Posterior vena cava (tissue), 2 donors: ENCODE measurements at regions of chr1 and their contacts with region 1.

Region 1: DNA sequence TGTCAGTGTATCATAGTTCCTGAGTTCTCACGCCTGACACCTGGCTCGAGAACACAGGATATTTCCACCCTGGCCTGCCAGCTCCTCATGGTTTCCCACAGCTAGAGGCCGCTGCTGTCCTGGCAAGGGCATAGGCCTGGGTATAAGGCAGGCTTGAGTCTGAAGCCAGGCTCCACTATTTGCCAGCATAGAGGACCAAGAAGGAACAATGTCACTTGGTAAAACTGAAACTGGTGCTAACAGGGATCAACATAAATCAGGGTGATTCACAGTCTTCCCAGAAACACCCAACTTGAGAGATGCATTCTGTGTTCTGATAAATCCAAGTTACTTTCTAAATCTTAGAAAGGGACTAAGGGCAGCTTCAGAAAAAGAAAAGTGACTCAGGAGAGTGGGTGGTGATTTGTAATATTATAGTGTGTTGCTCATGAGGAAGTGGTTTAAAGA is 6.9 kb upstream of the S100A2 start:
- DNase-seq: peak; percentile 92

Region 2: GRCh38 chr1:153352523-153352922 is 220.1 kb before region 1 on chr1:
- intact Hi-C with region 1: loop called in 1 of 2 experiments (anchors 5 kb)
- DNase-seq: peak; percentile 88

Region 3: GRCh38 chr1:153510984-153511410 is 61.6 kb before region 1 on chr1:
- intact Hi-C with region 1: loop called (anchors 2 to 10 kb)
- DNase-seq: peak; percentile 93

Region 4: DNA sequence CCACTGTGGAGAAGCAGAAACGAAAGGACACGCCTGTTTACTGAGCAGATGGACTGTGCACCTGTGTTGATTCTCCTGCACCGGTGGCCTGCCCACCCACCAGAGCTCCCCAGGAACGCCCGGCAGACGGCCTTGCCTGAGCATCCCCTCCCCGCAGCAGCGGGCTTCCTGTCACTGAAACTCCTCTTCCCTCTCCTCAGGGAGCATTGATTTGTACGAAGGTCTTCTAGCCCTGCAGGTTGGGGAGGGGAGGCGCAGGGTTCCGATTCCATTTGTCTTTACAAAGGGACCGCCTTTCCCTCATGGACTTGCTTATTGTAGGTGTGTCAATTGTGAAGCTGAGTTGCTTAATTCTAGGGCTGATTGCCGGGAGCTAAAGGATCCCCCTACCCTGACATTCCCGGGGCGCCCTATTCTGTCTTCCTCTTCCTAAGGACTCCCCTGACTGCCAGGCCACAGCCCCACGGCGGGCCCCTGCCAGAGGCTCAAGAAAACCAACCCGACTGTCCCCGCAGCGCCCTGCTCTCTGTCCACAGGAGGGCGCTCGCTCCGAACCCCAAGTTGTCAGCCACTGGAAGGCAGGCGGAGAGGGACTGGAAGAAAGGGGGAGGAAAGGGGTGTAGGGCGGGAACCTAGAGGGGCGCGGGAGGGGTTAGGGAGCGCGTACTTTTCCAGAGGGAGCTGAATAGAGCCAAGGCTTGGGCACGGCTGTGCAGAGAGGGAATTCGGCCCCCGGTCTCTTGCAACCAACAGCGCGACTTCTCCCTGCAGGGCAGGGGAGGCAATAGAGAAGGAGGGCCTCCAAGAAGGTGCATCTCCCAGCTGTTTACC is 39.6 kb before region 1 on chr1:
- intact Hi-C with region 1: loop called (anchors 5 kb)
- DNase-seq: peak; percentile 95

Region 5: DNA sequence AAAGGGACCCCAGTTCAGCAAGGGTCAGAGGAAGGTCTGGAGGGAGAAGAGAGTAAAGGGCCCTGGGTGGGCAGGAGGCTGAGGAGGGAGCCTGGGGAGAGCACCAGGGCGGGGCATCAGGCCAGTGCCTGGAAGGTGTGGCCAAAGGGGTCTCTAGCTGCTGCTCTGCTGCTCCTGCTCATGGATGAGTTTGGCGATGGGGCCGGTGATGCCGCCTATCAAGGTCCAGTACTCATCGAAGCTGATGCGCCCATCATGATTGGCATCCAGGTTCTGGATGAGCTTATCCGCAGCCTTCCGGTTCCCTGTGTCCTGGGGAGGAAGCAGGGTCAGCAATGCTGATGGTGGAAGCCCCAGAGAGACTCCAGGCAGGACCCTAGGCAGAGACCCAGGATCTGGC is 34.8 kb after region 1 on chr1:
- intact Hi-C with region 1: no loop called
- DNase-seq: no peak

Region 6: DNA sequence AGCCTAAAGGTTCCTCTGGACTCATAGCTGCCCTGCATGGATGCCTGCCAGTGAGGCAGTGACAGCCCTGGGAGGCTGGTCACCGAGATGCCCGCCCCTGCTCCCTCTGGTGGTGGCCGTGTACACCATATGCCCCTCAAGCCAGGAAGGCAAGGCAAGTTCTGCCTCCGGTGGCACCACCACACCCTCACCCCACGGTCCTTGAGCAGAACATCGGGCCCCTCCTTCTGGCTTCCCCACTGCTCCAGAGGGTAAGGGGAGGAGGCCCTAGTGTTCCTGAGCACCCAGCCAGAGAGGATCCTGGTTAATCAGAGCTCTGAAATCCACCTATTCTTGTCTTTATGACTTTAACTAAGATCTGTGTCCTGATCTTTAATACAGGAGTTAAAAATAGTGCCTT is 45.1 kb after region 1 on chr1:
- intact Hi-C with region 1: loop called (anchors 5 kb)
- DNase-seq: peak; percentile 93

Region 7: DNA sequence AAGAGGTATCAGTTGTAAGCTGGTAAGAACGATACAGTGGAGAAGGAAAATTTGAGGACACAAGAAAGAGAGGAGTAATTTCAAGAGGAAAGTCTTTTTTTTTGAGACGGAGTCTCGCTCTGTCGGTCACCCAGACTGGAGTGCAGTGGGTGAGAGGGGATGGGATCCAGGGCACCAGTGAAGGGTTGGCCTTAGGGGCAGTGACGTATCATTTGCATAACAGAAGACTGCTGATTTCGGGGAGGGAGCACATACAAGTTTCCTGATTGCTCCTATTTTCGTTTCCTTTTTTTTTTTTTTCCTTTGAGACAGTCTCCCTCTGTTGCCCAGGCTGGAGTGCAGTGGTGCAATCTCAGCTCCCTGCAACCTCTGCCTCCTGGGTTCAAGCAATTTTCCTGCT is 50.5 kb after region 1 on chr1:
- intact Hi-C with region 1: loop called (anchors 5 kb)
- DNase-seq: no peak